CD8-positive, alpha-beta T cell (primary cell): ENCODE measurements at regions of chr1 and their contacts with region 1.

Region 1: DNA sequence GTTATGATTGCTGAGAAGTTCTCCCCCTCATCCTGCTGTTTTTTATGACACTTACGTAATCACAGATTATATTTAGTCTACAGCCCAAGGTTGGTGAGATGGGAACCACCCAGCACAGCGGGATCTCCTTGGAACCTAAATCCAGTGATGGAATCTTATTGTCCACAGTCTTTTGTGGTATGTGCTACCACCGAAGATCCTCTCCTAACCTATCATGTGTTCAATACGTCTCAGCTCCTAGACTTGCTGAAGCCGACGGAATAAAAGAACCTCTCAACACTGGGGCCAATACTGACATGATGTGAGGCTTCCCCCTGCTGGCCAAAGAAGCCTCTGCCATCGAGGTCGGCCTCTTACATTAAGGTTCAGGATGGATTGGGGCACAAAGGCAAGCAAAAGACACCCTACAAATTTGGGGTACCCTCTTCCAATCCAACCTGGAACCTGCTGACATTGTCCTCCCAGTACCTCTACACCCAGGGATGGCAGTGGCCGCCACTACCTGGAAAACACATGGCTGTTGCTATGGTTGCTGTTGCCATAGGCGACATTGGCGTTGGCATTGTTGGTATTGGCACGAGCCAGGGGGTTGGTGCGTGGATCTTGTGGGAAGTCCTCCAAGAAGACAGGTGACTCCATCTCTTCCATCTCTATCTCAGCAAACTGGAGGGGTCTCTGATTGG is 19.4 kb upstream of the KIF21B start:
- DNase-seq: peak; percentile 49 to 84 (median 73)
- ATAC-seq: peak; percentile 98
- H3K4me3 ChIP-seq: no peak overlapping the region
- H3K4me3 Mint-ChIP-seq: no peak overlapping the region
- H3K27ac ChIP-seq: no peak overlapping the region
- H3K27ac Mint-ChIP-seq: no peak overlapping the region
- H3K4me1 ChIP-seq: no peaks in the 10 kb centered on the region
- H3K4me1 Mint-ChIP-seq: peaks cover 3% of the 10 kb centered on the region
- H3K27me3 ChIP-seq: no peaks in the 10 kb centered on the region
- H3K27me3 Mint-ChIP-seq: no peaks in the 10 kb centered on the region
- CTCF ChIP-seq: peak; percentile 81

Region 2: DNA sequence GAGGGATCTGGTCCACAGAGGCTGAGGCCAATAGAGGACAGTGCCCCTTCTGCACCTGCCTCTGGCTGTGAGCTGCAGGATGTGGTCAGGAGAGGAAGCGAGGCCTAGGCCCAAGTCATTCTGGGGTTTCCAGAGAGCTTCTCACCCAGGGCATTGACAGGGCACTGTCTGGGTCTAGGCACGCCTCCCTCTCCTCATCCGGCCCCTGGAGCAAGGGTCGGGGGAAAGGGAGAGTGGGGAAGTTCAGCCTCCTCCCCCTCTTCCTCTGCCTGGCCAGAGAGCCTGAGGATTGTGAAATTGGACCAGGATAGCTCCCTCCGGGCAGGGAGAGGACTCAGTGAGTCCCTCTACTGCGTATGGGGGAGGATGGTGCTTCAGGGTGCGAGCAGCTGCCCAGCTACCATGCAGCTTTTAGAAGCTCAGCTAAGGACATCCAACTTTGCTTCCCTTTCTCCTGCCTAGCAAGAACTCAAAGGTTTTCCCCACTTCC is 154.5 kb before region 1 on chr1:
- CTCF ChIA-PET with region 1: no interaction called
- POLR2A ChIA-PET with region 1: no interaction called
- intact Hi-C with region 1: loop called in 1 of 2 experiments (anchors 10 kb)
- DNase-seq: peak; percentile 42 to 90 (median 68)
- ATAC-seq: peak; percentile 86
- H3K4me3 ChIP-seq: peak overlapping the region; percentile 18 to 24
- H3K4me3 Mint-ChIP-seq: peak overlapping the region; percentile 66
- H3K27ac ChIP-seq: peak overlapping the region in 1 of 2 experiments; percentile 66
- H3K27ac Mint-ChIP-seq: peak overlapping the region; percentile 82
- H3K4me1 ChIP-seq: peaks cover 48% of the 10 kb centered on the region
- H3K4me1 Mint-ChIP-seq: peaks cover 61% of the 10 kb centered on the region
- H3K27me3 ChIP-seq: peaks cover 5 to 9% of the 10 kb centered on the region in 2 experiments
- H3K27me3 Mint-ChIP-seq: peaks cover 9% of the 10 kb centered on the region
- CTCF ChIP-seq: no peak

Region 3: GRCh38 chr1:200992382-200993048 is 50.4 kb before region 1 on chr1:
- CTCF ChIA-PET with region 1: interaction called, 16 read pairs
- POLR2A ChIA-PET with region 1: no interaction called
- intact Hi-C with region 1: no loop called
- DNase-seq: no peak
- ATAC-seq: no peak
- H3K4me3 ChIP-seq: no peak overlapping the region
- H3K4me3 Mint-ChIP-seq: no peak overlapping the region
- H3K27ac ChIP-seq: no peak overlapping the region
- H3K27ac Mint-ChIP-seq: no peak overlapping the region
- H3K4me1 ChIP-seq: no peaks in the 10 kb centered on the region
- H3K4me1 Mint-ChIP-seq: no peaks in the 10 kb centered on the region
- H3K27me3 ChIP-seq: no peaks in the 10 kb centered on the region
- H3K27me3 Mint-ChIP-seq: no peaks in the 10 kb centered on the region
- CTCF ChIP-seq: no peak

Region 4: GRCh38 chr1:201023517-201023902 is 19.4 kb before region 1 on chr1 and contains the start of gene KIF21B:
- CTCF ChIA-PET with region 1: interaction called, 98 read pairs
- POLR2A ChIA-PET with region 1: no interaction called
- intact Hi-C with region 1: loop called in 1 of 2 experiments (anchors 1 kb)
- DNase-seq: peak; percentile 87 to 95 (median 91)
- ATAC-seq: peak; percentile 80
- H3K4me3 ChIP-seq: peak within 1 kb of the TSS; percentile 64 to 73
- H3K4me3 Mint-ChIP-seq: peak within 1 kb of the TSS; percentile 94
- H3K27ac ChIP-seq: peak within 1 kb of the TSS; percentile 62 to 73
- H3K27ac Mint-ChIP-seq: peak within 1 kb of the TSS; percentile 99
- H3K4me1 ChIP-seq: peaks cover 56% of the 10 kb centered on the region
- H3K4me1 Mint-ChIP-seq: peaks cover 71% of the 10 kb centered on the region
- H3K27me3 ChIP-seq: no peaks in the 10 kb centered on the region
- H3K27me3 Mint-ChIP-seq: no peaks in the 10 kb centered on the region
- CTCF ChIP-seq: no peak
- total RNA-seq, gene KIF21B: 62.2 to 63.5 TPM